ENCODE measurements at regions of chr10 and their contacts with region 1.

Region 1: DNA sequence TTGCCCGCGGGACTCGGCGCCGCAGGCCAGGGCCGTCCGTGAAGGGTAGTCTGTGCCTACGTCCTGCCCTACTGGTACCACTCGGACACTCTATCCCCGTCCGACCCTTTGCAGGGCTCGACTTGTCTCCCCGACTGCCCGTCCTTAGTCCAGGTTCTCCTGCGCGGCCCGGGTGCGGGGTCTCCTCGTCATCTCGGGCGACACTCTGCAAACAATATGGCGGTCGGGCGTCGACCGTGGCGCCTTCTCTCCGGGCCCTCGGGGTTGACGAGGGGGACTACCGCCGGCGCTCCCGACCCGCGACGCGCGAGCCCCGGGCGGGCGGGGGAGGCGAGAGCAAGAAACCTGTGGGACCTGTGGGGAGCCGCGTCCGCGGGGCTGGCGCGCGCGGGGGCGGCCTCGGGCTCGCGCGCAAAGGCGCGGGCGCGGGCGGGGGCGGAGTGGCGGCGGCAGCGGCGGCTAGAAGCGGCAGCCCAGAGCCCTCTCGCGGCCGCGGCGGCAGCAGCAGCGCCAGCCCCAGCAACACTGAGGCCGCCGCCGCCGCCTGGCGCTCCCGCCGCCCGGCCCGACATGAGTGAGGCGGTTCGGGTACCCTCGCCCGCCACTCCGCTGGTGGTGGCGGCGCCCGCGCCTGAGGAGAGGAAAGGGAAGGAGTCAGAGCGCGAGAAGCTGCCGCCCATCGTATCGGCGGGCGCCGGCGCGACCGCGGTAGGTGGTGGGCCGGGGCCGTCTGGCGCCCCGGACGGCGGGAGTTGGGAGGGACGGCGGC is at the start of gene HECTD2:
- DNase-seq: peak; percentile 46 to 71
- ATAC-seq: peak; percentile 84
- H3K4me3 ChIP-seq: peak within 1 kb of the TSS; percentile 70 to 91 (median 80)
- H3K27ac ChIP-seq: peak within 1 kb of the TSS; percentile 89 to 98 (median 97)
- H3K4me1 ChIP-seq: peaks cover 8 to 11% of the 10 kb centered on the region in 2 donors
- H3K27me3 ChIP-seq: no peaks in the 10 kb centered on the region
- CTCF ChIP-seq: peak in 4 of 5 experiments; percentile 64 to 84 (median 73)
- POLR2A ChIP-seq: peak; percentile 47 to 73
- total RNA-seq, gene HECTD2: 1.9 to 7.9 (median 3.9) TPM

Region 2: GRCh38 chr10:91298224-91298871 is 111.7 kb before region 1 on chr10:
- in situ Hi-C with region 1: no loop called
- intact Hi-C with region 1: loop called (anchors 1 kb)
- DNase-seq: peak; percentile 57 to 72
- ATAC-seq: peak; percentile 87 to 94
- H3K4me3 ChIP-seq: peak overlapping the region; percentile 29 to 64 (median 38)
- H3K27ac ChIP-seq: peak overlapping the region in 1 of 4 donors; percentile 32
- H3K4me1 ChIP-seq: peaks cover 4 to 5% of the 10 kb centered on the region in 2 donors
- H3K27me3 ChIP-seq: no peaks in the 10 kb centered on the region
- CTCF ChIP-seq: peak; percentile 91 to 98 (median 94)
- POLR2A ChIP-seq: peak in 1 of 2 donors; percentile 3

Region 3: GRCh38 chr10:91389636-91390512 is 20.2 kb before region 1 on chr10:
- in situ Hi-C with region 1: no loop called
- intact Hi-C with region 1: loop called (anchors 1 kb)
- DNase-seq: no peak
- ATAC-seq: peak; percentile 77 to 97
- H3K4me3 ChIP-seq: peak overlapping the region in 2 of 4 donors; percentile 18 to 36
- H3K27ac ChIP-seq: no peak overlapping the region
- H3K4me1 ChIP-seq: peaks cover 0 to 3% of the 10 kb centered on the region in 2 donors
- H3K27me3 ChIP-seq: peaks cover 0 to 4% (median 0%) of the 10 kb centered on the region in 3 donors
- CTCF ChIP-seq: peak; percentile 58 to 77 (median 61)
- POLR2A ChIP-seq: no peak

Region 4: GRCh38 chr10:91460681-91461080 is 50.6 kb after region 1 on chr10:
- in situ Hi-C with region 1: no loop called
- intact Hi-C with region 1: no loop called
- DNase-seq: no peak
- ATAC-seq: no peak
- H3K4me3 ChIP-seq: no peak overlapping the region
- H3K27ac ChIP-seq: no peak overlapping the region
- H3K4me1 ChIP-seq: no peaks in the 10 kb centered on the region
- H3K27me3 ChIP-seq: no peaks in the 10 kb centered on the region
- CTCF ChIP-seq: no peak
- POLR2A ChIP-seq: no peak

Region 5: DNA sequence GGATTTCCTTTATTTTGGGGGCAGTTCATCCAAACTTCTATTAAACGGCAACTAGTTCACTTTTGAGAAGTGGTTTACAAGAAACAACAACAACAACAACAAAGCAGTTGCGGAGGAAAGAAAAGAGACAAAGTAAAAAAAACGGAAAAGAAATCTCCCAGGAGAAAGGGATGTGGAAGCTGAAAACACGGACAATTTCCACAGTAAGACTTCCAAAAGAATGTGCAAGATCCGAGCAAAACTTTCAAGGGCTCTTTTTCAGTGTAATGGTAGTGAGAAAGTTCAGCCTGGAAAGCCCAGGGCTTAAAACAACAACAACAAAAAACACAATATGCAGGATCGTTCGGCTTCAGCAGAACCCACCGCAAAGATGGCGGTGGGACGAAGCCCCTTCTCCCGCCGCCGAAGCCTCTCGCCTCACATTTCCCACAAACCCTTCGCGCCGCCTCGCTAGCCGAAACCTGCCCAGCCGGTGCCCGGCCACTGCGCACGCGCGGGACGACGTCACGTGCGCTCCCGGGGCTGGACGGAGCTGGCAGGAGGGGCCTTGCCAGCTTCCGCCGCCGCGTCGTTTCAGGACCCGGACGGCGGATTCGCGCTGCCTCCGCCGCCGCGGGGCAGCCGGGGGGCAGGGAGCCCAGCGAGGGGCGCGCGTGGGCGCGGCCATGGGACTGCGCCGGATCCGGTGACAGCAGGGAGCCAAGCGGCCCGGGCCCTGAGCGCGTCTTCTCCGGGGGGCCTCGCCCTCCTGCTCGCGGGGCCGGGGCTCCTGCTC is 388.0 kb after region 1 on chr10 and contains the start of gene TNKS2:
- in situ Hi-C with region 1: no loop called
- intact Hi-C with region 1: loop called (anchors 5 kb)
- DNase-seq: peak; percentile 85 to 93
- ATAC-seq: peak; percentile 67 to 77
- H3K4me3 ChIP-seq: peak within 1 kb of the TSS; percentile 72 to 93 (median 84)
- H3K27ac ChIP-seq: peak within 1 kb of the TSS; percentile 95 to 97 (median 96)
- H3K4me1 ChIP-seq: peaks cover 41 to 50% of the 10 kb centered on the region in 2 donors
- H3K27me3 ChIP-seq: no peaks in the 10 kb centered on the region
- CTCF ChIP-seq: peak in 1 of 5 experiments; percentile 13
- POLR2A ChIP-seq: peak; percentile 95 to 96
- total RNA-seq, gene TNKS2: 26.2 to 40.3 (median 29.5) TPM

Region 6: DNA sequence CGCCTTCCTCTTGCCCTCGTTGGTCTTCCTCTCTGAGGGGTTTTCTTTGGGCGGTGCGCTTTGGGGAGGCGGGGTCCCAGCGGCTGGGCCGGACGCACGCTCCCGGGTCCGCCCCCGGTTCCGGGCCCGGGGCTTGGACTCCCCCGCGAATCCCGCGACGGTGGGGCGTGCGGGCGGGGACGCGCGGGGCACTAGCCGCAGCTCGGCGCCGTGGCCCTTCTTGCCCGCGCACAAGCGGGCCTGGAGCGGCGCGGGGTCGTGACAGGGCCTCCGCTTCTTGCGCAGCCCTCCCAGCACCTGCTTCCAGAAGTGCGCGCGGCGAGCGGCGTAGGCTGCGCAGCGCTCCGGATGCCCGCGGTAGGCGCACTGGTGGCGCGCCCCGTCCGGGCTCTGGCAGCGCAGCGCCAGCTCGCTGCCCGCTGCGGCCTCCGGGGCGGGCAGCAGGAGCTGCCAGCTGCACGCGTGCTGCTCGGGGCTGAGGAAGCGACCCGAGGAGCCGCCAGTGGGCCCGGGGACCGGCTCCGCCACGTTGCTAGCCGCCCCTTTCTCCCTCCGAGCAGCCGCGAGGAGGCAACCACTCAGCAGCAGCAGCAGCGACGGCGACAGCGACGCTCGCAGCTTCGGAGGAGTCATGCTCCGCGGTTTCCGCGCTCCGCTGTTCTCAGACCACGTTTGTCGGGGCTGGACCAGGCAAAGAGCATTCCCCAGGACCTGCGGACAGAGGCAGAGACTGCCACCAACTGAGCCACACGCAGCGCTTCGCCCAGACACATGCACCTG is 498.5 kb after region 1 on chr10:
- in situ Hi-C with region 1: no loop called
- intact Hi-C with region 1: loop called (anchors 10 kb)
- DNase-seq: peak; percentile 33 to 67
- ATAC-seq: peak; percentile 94
- H3K4me3 ChIP-seq: peak overlapping the region; percentile 67 to 84 (median 72)
- H3K27ac ChIP-seq: peak overlapping the region; percentile 44 to 60 (median 56)
- H3K4me1 ChIP-seq: peaks cover 7 to 16% of the 10 kb centered on the region in 2 donors
- H3K27me3 ChIP-seq: no peaks in the 10 kb centered on the region
- CTCF ChIP-seq: peak in 2 of 5 experiments; percentile 26 to 44
- POLR2A ChIP-seq: no peak

Region 7: DNA sequence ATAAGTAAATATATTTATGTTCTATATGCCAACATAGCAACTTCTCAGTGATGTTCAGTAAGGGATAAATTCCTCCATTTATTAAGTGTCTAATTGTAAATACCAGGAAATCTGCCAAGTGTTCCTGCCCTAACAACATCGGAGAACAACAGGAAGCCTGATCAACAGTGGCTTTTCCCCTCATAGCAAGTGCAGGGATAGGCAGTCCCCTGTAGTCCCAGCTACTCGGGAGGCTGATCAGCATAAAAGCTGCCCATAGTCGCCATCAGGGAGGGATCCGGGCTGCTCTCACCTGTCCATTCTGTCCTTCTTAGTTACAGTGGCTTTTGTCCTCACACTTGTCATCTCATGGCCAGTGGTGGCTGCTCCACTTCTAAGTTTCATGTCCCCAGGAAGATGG is 1022.5 kb after region 1 on chr10:
- in situ Hi-C with region 1: no loop called
- intact Hi-C with region 1: loop called (anchors 5 kb)
- DNase-seq: no peak
- ATAC-seq: peak in 1 of 2 donors; percentile 30
- H3K4me3 ChIP-seq: no peak overlapping the region
- H3K27ac ChIP-seq: peak overlapping the region; percentile 35 to 61 (median 49)
- H3K4me1 ChIP-seq: peaks cover 11 to 12% of the 10 kb centered on the region in 2 donors
- H3K27me3 ChIP-seq: no peaks in the 10 kb centered on the region
- CTCF ChIP-seq: no peak
- POLR2A ChIP-seq: no peak